Mammary epithelial cell (primary cell): ENCODE measurements at regions of chr11 and their contacts with region 1.

Region 1: GRCh38 chr11:34105079-34105956 is at the start of gene NAT10:
- DNase-seq: peak; percentile 99
- H3K4me3 ChIP-seq: peak within 1 kb of the TSS; percentile 58 to 77 (median 76)
- H3K27ac ChIP-seq: peak within 1 kb of the TSS; percentile 87
- H3K4me1 ChIP-seq: peaks cover 12% of the 10 kb centered on the region
- H3K27me3 ChIP-seq: no peaks in the 10 kb centered on the region
- CTCF ChIP-seq: peak in 1 of 2 donors; percentile 29
- total RNA-seq, gene NAT10: 28.2 to 71.5 TPM

Region 2: GRCh38 chr11:34051349-34052035 is 53.8 kb before region 1 on chr11 and contains the start of gene CAPRIN1:
- CTCF ChIA-PET with region 1: no interaction called
- dilution Hi-C with region 1: no loop called
- in situ Hi-C with region 1: no loop called
- intact Hi-C with region 1: loop called (anchors 2 kb)
- DNase-seq: peak; percentile 89
- H3K4me3 ChIP-seq: peak within 1 kb of the TSS; percentile 90 to 100 (median 99)
- H3K27ac ChIP-seq: peak within 1 kb of the TSS; percentile 94
- H3K4me1 ChIP-seq: peaks cover 10% of the 10 kb centered on the region
- H3K27me3 ChIP-seq: no peaks in the 10 kb centered on the region
- CTCF ChIP-seq: no peak
- total RNA-seq, gene CAPRIN1: 194 to 217 TPM